Gastrocnemius medialis (tissue), 4 donors: ENCODE measurements at regions of chr11 and their contacts with region 1.

Region 1: GRCh38 chr11:67071420-67072284 is 15.0 kb downstream of the RHOD start:
- DNase-seq: peak; percentile 49 to 66
- ATAC-seq: peak; percentile 87 to 88
- H3K4me3 ChIP-seq: peak overlapping the region; percentile 32 to 59 (median 43)
- H3K27ac ChIP-seq: peak overlapping the region in 1 of 4 donors; percentile 20
- H3K4me1 ChIP-seq: no peaks in the 10 kb centered on the region
- H3K27me3 ChIP-seq: no peaks in the 10 kb centered on the region
- CTCF ChIP-seq: peak; percentile 72 to 91 (median 85)
- POLR2A ChIP-seq: no peak

Region 2: DNA sequence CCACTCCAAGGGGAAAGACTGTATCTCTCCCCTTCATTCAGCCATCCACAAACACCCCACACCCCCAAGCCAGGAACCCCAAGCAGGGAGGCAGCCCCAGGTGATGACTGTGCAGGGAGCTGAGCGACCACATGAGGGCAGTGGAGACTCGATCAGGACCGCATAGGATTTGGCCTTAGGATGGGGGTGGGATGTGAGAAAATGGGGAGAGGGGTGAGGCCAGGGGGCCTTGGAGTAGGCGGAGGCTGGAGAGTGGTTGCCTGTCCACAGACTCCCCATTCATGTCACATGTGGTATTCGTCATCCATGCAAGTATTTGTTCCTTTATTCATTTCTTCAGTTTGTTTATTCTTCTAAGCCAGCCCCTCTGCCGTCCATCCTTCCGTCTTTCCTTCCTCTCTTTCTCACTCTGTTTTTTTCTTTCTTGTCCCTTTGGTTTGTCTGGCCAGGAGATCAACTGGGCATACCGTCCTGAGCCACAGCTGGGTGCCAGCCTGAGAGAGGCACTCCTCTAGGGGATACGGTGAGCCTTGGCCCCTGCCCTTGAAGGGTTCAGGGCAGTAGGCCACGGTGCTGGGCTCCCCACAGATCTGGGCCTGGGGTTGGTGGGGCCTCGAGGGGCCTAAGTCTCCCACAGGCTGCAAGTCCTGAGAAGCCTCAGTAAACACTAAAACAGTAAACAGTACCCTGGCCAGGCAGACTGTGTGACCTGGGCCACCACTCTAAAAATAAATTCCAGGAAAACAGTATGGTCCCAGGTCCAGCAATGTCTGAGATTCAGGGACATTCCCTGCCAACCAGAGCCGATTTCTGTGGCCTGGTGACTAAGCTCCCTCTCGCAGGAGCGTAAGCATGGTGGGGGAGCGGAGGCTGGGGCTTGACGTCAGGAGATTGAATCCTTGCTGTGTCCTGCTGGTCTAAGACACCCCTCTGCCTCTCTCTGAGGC is 17.5 kb before region 1 on chr11:
- in situ Hi-C with region 1: no loop called
- intact Hi-C with region 1: loop called (anchors 1 kb)
- DNase-seq: peak; percentile 47 to 67
- ATAC-seq: peak; percentile 50 to 67
- H3K4me3 ChIP-seq: no peak overlapping the region
- H3K27ac ChIP-seq: peak overlapping the region; percentile 73 to 90 (median 84)
- H3K4me1 ChIP-seq: peaks cover 14 to 28% of the 10 kb centered on the region in 2 donors
- H3K27me3 ChIP-seq: no peaks in the 10 kb centered on the region
- CTCF ChIP-seq: peak; percentile 36 to 79 (median 69)
- POLR2A ChIP-seq: peak in 1 of 2 donors; percentile 43